Activated CD8-positive, alpha-beta T cell treated with anti-CD3 and anti-CD28 coated beads, Interleukin-2, amount 10 ng/mL, durations not matched to agents 7 days and 5 days (primary cell): ENCODE measurements at regions of chr11 and their contacts with region 1.

Region 1: DNA sequence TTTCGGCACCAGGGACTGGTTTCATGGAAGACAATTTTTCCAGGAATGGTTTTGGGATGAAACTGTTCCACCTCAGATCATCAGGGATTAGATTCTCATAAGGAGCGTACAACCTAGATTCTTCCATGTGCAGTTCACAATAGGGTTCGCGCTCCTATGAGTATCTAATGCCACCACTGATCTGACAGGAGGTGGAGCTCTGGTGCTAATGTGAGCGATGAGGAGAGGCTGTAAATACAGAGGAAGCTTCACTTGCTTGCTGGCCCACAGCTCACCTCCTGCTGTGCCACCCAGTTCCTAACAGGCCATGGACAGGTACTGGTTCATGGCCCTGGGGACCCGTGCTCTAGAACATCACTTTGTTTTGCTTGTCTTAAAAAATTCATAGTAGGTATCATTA is 41.8 kb upstream of the AMPD3 start:
- DNase-seq: peak; percentile 81
- ATAC-seq: peak; percentile 91
- H3K4me3 Mint-ChIP-seq: no peak overlapping the region
- H3K27ac Mint-ChIP-seq: no peak overlapping the region
- H3K4me1 Mint-ChIP-seq: peaks cover 41% of the 10 kb centered on the region
- H3K27me3 Mint-ChIP-seq: peaks cover 12% of the 10 kb centered on the region

Region 2: DNA sequence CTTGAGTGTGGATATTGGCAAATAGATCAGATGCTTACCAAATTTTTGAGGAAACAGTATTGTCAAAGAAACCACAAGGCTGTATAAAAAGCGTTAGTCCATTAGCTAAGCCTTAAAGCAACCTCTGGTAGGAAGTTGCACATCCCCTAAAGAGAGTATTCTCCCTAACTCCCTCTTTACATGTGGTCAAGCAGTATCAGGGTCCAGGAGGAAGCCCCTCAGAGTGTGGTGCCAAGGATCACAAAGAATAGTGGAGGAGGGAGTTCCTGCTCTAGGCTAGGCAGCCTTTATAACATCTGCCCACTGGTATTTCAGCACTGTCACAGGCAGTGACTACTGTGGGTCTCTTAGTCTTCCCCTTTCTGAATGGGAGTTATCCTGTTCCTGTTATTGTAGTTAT is 23.0 kb after region 1 on chr11:
- CTCF ChIA-PET with region 1: interaction called, 15 read pairs
- POLR2A ChIA-PET with region 1: no interaction called
- DNase-seq: no peak
- ATAC-seq: no peak
- H3K4me3 Mint-ChIP-seq: no peak overlapping the region
- H3K27ac Mint-ChIP-seq: no peak overlapping the region
- H3K4me1 Mint-ChIP-seq: peaks cover 7% of the 10 kb centered on the region
- H3K27me3 Mint-ChIP-seq: peaks cover 42% of the 10 kb centered on the region

Region 3: DNA sequence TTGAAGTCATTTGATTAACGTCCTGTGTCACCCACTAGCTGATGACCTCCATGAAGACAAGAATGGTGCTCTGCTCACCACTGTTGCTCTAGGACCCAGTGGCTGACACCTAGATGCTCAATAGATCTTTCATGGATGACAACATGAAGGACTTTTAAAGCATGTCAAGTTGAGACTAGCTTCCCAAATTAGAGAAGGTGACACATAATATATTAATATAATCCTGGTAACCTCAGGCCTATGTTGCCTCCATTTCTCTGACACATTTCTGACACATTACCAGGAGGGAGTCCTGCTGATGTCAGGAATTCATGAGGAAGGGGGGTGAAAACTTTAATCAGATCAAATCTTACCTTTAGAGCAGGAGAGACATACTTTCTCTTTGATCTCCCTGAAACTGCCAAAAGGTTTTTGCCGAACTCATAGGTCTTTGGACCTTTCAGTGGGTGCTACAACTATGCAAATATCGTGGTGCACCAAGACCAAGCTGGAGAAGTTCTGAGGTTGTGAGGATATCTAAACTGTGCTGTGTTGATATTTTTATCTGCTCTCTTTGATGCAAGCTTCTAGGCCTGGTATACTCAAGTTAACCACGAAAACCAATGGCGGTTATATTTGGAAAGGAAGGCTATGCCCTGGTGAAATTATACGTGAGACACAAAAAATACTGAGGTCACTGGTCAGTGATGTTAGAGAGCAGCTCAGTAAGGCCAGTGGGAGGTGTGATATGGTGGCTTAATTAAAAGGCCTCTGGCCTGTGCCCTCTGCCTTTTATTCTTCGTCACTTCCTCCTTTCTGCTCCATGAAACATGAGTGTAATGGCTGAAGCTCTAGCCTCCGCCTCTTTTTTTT is 28.6 kb after region 1 on chr11:
- CTCF ChIA-PET with region 1: interaction called, 15 read pairs
- POLR2A ChIA-PET with region 1: no interaction called
- DNase-seq: peak; percentile 68
- ATAC-seq: peak; percentile 90
- H3K4me3 Mint-ChIP-seq: peak overlapping the region; percentile 28
- H3K27ac Mint-ChIP-seq: peak overlapping the region; percentile 70
- H3K4me1 Mint-ChIP-seq: peaks cover 41% of the 10 kb centered on the region
- H3K27me3 Mint-ChIP-seq: peaks cover 38% of the 10 kb centered on the region

Region 4: GRCh38 chr11:10450464-10451425 is 37.5 kb after region 1 on chr11:
- CTCF ChIA-PET with region 1: interaction called, 42 read pairs
- POLR2A ChIA-PET with region 1: interaction called, 5 read pairs
- DNase-seq: peak; percentile 57
- ATAC-seq: peak; percentile 89
- H3K4me3 Mint-ChIP-seq: peak overlapping the region; percentile 55
- H3K27ac Mint-ChIP-seq: peak overlapping the region; percentile 62
- H3K4me1 Mint-ChIP-seq: peaks cover 44% of the 10 kb centered on the region
- H3K27me3 Mint-ChIP-seq: peaks cover 36% of the 10 kb centered on the region

Region 5: GRCh38 chr11:10455637-10456487 is 42.6 kb after region 1 on chr11:
- CTCF ChIA-PET with region 1: interaction called, 42 read pairs
- POLR2A ChIA-PET with region 1: interaction called, 5 read pairs
- DNase-seq: peak; percentile 88
- ATAC-seq: peak; percentile 83
- H3K4me3 Mint-ChIP-seq: peak overlapping the region; percentile 85
- H3K27ac Mint-ChIP-seq: peak overlapping the region; percentile 92
- H3K4me1 Mint-ChIP-seq: peaks cover 67% of the 10 kb centered on the region
- H3K27me3 Mint-ChIP-seq: peaks cover 17% of the 10 kb centered on the region

Region 6: DNA sequence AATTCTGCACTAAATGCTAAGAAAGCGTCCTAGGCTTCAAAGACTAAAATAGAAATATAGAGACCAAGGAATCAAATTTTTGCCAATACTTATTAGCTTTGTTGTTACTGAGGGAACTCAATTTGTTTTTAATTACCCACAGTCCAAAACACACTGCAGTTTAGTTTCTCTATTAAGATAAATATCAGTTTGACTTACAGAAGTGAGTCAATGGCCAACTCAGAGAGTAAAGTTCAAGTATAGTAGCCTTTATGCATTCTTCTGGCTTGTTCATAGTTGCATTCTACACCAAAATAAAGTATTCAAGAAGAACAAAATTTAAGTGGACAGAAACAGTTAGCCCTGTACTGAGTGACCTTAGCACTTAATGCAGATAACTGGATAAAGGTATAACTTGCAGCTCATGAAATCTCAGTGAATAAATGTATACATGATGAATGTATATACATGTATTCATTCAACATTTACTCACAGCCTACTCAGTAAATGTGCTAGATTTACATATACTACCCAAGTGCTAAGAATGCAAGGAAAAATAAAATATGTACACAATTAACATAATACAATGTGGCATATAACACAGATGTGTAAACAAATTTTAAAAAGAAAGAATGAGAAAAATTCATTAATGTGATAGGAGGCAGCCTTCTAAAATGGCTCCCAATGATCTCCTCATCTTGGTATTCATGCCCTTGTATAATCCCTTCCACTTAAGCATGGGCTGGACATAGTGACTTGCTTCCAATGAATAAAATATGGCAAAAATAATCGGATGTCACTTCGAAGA is 137.4 kb after region 1 on chr11:
- CTCF ChIA-PET with region 1: no interaction called
- POLR2A ChIA-PET with region 1: no interaction called
- DNase-seq: no peak
- ATAC-seq: no peak
- H3K4me3 Mint-ChIP-seq: no peak overlapping the region
- H3K27ac Mint-ChIP-seq: no peak overlapping the region
- H3K4me1 Mint-ChIP-seq: no peaks in the 10 kb centered on the region
- H3K27me3 Mint-ChIP-seq: peaks cover 24% of the 10 kb centered on the region

Region 7: GRCh38 chr11:10653926-10654810 is 240.9 kb after region 1 on chr11:
- CTCF ChIA-PET with region 1: interaction called, 146 read pairs
- POLR2A ChIA-PET with region 1: no interaction called
- DNase-seq: peak; percentile 59
- ATAC-seq: peak; percentile 72
- H3K4me3 Mint-ChIP-seq: no peak overlapping the region
- H3K27ac Mint-ChIP-seq: no peak overlapping the region
- H3K4me1 Mint-ChIP-seq: peaks cover 24% of the 10 kb centered on the region
- H3K27me3 Mint-ChIP-seq: peaks cover 2% of the 10 kb centered on the region

Region 8: DNA sequence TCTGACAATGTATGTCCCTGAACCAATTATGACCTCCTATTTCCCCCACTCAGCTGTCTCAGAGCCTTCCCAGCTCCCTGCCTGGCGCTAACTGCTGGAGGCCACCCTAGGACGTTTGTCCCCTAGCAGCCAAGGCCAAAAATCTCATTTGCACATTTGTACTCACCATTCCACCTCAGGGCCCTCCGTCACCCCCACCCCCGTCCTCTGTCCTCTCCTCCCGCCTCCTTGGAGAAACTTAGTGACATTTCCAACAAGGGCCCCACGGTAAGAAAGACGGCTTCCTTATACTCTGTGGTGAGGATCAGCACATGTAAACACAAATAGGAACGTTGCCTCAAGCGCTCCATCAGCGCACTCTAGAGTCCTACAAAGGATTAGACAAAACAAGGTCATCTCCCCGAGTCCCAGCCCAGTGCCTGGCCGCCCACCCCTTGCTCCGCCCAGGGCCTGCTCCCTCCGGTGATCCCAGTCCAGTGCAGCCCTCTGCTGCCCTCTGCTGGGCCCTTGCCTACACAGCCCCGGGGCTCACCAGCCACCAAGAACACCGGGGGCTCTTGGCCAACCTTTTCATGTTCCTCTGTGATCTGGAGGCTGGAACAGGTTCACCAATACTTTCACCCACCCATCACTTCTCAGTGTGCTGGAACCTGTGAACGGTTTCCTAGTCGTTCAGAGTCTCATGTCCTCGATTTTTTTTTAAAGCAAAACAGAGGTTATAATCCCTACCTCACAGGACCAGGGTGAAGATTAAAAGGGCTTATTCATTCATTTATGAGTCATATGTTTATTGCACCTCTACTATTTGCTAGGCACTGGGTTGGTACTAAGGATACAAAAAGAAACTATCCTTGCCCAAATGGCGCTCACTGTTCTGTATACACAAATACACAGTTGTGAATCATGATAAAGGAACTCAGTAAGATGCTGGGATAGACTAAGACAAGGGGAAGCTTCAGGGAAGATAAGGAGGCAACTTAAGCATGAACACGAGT is 322.5 kb after region 1 on chr11:
- CTCF ChIA-PET with region 1: interaction called, 48 read pairs
- POLR2A ChIA-PET with region 1: no interaction called
- DNase-seq: peak; percentile 91
- ATAC-seq: peak; percentile 100
- H3K4me3 Mint-ChIP-seq: peak overlapping the region; percentile 20
- H3K27ac Mint-ChIP-seq: no peak overlapping the region
- H3K4me1 Mint-ChIP-seq: peaks cover 10% of the 10 kb centered on the region
- H3K27me3 Mint-ChIP-seq: peaks cover 27% of the 10 kb centered on the region